GM18951 (cell line): ENCODE measurements at regions of chr1 and their contacts with region 1.

Region 1: GRCh38 chr1:40508375-40509341 is at the start of gene EXO5:
- POLR2A ChIP-seq: peak; percentile 82

Region 2: GRCh38 chr1:40449684-40450494 is 58.8 kb before region 1 on chr1 and contains the start of gene ZFP69B:
- in situ Hi-C with region 1: loop called (anchors 10 kb)
- POLR2A ChIP-seq: peak; percentile 75